ENCODE measurements at regions of chr10 and their contacts with region 1.

Region 1: GRCh38 chr10:13776861-13777311 is 190.1 kb downstream of the PRPF18 start:
- DNase-seq: no peak

Region 2: GRCh38 chr10:13613519-13613918 is 163.4 kb before region 1 on chr10:
- intact Hi-C with region 1: loop called (anchors 2 kb)
- DNase-seq: no peak

Region 3: GRCh38 chr10:13659897-13660550 is 116.9 kb before region 1 on chr10:
- intact Hi-C with region 1: loop called (anchors 1 kb)
- DNase-seq: peak; percentile 67 to 96 (median 83)

Measured in posterior cingulate gyrus (tissue), 11 donors.